CD4-positive, alpha-beta memory T cell (primary cell): ENCODE measurements at regions of chr1 and their contacts with region 1.

Region 1: GRCh38 chr1:24391882-24392603 is 21.5 kb downstream of the STPG1 start:
- DNase-seq: peak; percentile 62 to 75 (median 69)
- H3K4me3 ChIP-seq: peak overlapping the region in 1 of 2 donors; percentile 17
- H3K4me3 Mint-ChIP-seq: peak overlapping the region; percentile 81 to 92 (median 86)
- H3K27ac ChIP-seq: peak overlapping the region; percentile 72
- H3K27ac Mint-ChIP-seq: peak overlapping the region; percentile 94 to 99 (median 98)
- H3K4me1 ChIP-seq: peaks cover 33% of the 10 kb centered on the region
- H3K4me1 Mint-ChIP-seq: peaks cover 23 to 29% (median 26%) of the 10 kb centered on the region in 4 donors
- H3K27me3 ChIP-seq: no peaks in the 10 kb centered on the region
- H3K27me3 Mint-ChIP-seq: no peaks in the 10 kb centered on the region

Region 2: DNA sequence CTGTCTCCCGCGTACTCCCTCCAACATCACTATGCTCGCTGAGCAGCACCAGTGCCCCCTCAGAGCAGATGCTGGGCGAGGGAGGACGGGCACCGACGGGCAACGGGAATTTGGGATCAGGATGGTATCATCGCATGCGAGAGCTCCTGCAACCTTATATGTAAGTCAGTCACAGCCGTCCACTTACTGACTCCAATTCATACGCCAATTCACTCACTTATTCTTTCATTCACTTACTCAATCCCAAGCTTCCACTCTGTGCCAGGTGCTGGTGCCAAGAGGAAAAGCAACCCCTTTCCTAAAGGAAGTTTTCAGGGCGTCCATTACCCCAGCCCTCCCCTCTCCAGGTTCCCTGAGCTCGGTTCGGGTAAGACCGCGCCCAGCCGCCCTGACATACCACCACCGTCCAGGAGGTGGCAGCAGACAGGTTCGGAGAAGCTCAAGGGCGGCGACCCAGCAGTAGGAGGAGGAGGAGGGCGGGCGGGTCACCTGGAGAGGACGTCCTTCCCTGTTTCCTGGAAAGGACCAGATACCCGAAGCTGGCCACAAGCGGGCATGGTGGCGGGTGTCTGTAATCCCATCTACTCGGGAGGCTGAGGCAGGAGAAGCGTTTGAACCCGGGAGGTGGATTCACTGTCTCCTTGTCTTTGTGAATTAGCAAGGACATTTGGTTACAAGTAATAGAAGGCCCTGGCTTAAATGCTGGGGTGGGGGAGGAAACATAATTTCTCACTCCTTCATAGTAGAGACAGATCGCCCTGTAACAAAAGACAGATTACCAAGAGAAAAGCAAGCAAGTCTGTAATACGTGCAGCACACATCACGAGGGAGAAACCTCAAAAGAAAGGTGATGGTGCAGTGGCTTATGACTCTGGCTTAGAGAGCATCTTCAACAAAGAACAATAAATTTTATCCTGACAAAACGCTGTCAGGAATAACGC is 241.5 kb before region 1 on chr1:
- CTCF ChIA-PET with region 1: interaction called, 158 read pairs
- POLR2A ChIA-PET with region 1: interaction called, 14 read pairs
- intact Hi-C with region 1: loop called (anchors 1 kb)
- DNase-seq: peak; percentile 72 to 81 (median 74)
- H3K4me3 ChIP-seq: no peak overlapping the region
- H3K4me3 Mint-ChIP-seq: peak overlapping the region; percentile 39 to 80 (median 68)
- H3K27ac ChIP-seq: no peak overlapping the region
- H3K27ac Mint-ChIP-seq: peak overlapping the region in 2 of 7 donors; percentile 1 to 75
- H3K4me1 ChIP-seq: peaks cover 10% of the 10 kb centered on the region
- H3K4me1 Mint-ChIP-seq: peaks cover 7 to 11% (median 9%) of the 10 kb centered on the region in 4 donors
- H3K27me3 ChIP-seq: no peaks in the 10 kb centered on the region
- H3K27me3 Mint-ChIP-seq: peaks cover 9 to 18% of the 10 kb centered on the region in 2 donors

Region 3: GRCh38 chr1:24193046-24193445 is 199.0 kb before region 1 on chr1:
- CTCF ChIA-PET with region 1: interaction called, 517 read pairs
- POLR2A ChIA-PET with region 1: interaction called, 86 read pairs
- intact Hi-C with region 1: no loop called
- DNase-seq: no peak
- H3K4me3 ChIP-seq: no peak overlapping the region
- H3K4me3 Mint-ChIP-seq: no peak overlapping the region
- H3K27ac ChIP-seq: no peak overlapping the region
- H3K27ac Mint-ChIP-seq: no peak overlapping the region
- H3K4me1 ChIP-seq: peaks cover 14% of the 10 kb centered on the region
- H3K4me1 Mint-ChIP-seq: peaks cover 9 to 25% (median 18%) of the 10 kb centered on the region in 4 donors
- H3K27me3 ChIP-seq: no peaks in the 10 kb centered on the region
- H3K27me3 Mint-ChIP-seq: peaks cover 0 to 1% of the 10 kb centered on the region in 2 donors

Region 4: GRCh38 chr1:24321697-24322469 is 70.2 kb before region 1 on chr1:
- CTCF ChIA-PET with region 1: interaction called, 9 read pairs
- POLR2A ChIA-PET with region 1: interaction called, 4 read pairs
- intact Hi-C with region 1: loop called (anchors 5 kb)
- DNase-seq: peak; percentile 56 to 84 (median 68)
- H3K4me3 ChIP-seq: peak overlapping the region; percentile 1 to 42
- H3K4me3 Mint-ChIP-seq: peak overlapping the region; percentile 80 to 92 (median 86)
- H3K27ac ChIP-seq: no peak overlapping the region
- H3K27ac Mint-ChIP-seq: peak overlapping the region; percentile 29 to 91 (median 84)
- H3K4me1 ChIP-seq: peaks cover 45% of the 10 kb centered on the region
- H3K4me1 Mint-ChIP-seq: peaks cover 36 to 65% (median 42%) of the 10 kb centered on the region in 4 donors
- H3K27me3 ChIP-seq: peaks cover 4% of the 10 kb centered on the region
- H3K27me3 Mint-ChIP-seq: peaks cover 19 to 29% of the 10 kb centered on the region in 2 donors

Region 5: GRCh38 chr1:24409535-24409934 is 17.5 kb after region 1 on chr1:
- CTCF ChIA-PET with region 1: interaction called, 100 read pairs
- POLR2A ChIA-PET with region 1: interaction called, 32 read pairs
- intact Hi-C with region 1: no loop called
- DNase-seq: no peak
- H3K4me3 ChIP-seq: no peak overlapping the region
- H3K4me3 Mint-ChIP-seq: no peak overlapping the region
- H3K27ac ChIP-seq: no peak overlapping the region
- H3K27ac Mint-ChIP-seq: no peak overlapping the region
- H3K4me1 ChIP-seq: peaks cover 12% of the 10 kb centered on the region
- H3K4me1 Mint-ChIP-seq: peaks cover 9 to 21% (median 15%) of the 10 kb centered on the region in 4 donors
- H3K27me3 ChIP-seq: no peaks in the 10 kb centered on the region
- H3K27me3 Mint-ChIP-seq: no peaks in the 10 kb centered on the region

Region 6: GRCh38 chr1:24526940-24527542 is 135.0 kb after region 1 on chr1:
- CTCF ChIA-PET with region 1: interaction called, 33 read pairs
- POLR2A ChIA-PET with region 1: no interaction called
- intact Hi-C with region 1: no loop called
- DNase-seq: peak; percentile 47 to 59 (median 53)
- H3K4me3 ChIP-seq: no peak overlapping the region
- H3K4me3 Mint-ChIP-seq: peak overlapping the region in 3 of 8 donors; percentile 36 to 58 (median 52)
- H3K27ac ChIP-seq: peak overlapping the region; percentile 31
- H3K27ac Mint-ChIP-seq: peak overlapping the region; percentile 65 to 94 (median 87)
- H3K4me1 ChIP-seq: peaks cover 71% of the 10 kb centered on the region
- H3K4me1 Mint-ChIP-seq: peaks cover 46 to 82% (median 63%) of the 10 kb centered on the region in 4 donors
- H3K27me3 ChIP-seq: no peaks in the 10 kb centered on the region
- H3K27me3 Mint-ChIP-seq: no peaks in the 10 kb centered on the region

Region 7: GRCh38 chr1:24830680-24831272 is 438.7 kb after region 1 on chr1:
- CTCF ChIA-PET with region 1: interaction called, 10 read pairs
- POLR2A ChIA-PET with region 1: interaction called, 3 read pairs
- intact Hi-C with region 1: loop called (anchors 10 kb)
- DNase-seq: peak in 4 of 5 donors; percentile 48 to 54 (median 52)
- H3K4me3 ChIP-seq: no peak overlapping the region
- H3K4me3 Mint-ChIP-seq: no peak overlapping the region
- H3K27ac ChIP-seq: no peak overlapping the region
- H3K27ac Mint-ChIP-seq: no peak overlapping the region
- H3K4me1 ChIP-seq: no peaks in the 10 kb centered on the region
- H3K4me1 Mint-ChIP-seq: no peaks in the 10 kb centered on the region
- H3K27me3 ChIP-seq: no peaks in the 10 kb centered on the region
- H3K27me3 Mint-ChIP-seq: peaks cover 5 to 7% of the 10 kb centered on the region in 2 donors